ENCODE measurements at regions of chr15 and their contacts with region 1.

Region 1: DNA sequence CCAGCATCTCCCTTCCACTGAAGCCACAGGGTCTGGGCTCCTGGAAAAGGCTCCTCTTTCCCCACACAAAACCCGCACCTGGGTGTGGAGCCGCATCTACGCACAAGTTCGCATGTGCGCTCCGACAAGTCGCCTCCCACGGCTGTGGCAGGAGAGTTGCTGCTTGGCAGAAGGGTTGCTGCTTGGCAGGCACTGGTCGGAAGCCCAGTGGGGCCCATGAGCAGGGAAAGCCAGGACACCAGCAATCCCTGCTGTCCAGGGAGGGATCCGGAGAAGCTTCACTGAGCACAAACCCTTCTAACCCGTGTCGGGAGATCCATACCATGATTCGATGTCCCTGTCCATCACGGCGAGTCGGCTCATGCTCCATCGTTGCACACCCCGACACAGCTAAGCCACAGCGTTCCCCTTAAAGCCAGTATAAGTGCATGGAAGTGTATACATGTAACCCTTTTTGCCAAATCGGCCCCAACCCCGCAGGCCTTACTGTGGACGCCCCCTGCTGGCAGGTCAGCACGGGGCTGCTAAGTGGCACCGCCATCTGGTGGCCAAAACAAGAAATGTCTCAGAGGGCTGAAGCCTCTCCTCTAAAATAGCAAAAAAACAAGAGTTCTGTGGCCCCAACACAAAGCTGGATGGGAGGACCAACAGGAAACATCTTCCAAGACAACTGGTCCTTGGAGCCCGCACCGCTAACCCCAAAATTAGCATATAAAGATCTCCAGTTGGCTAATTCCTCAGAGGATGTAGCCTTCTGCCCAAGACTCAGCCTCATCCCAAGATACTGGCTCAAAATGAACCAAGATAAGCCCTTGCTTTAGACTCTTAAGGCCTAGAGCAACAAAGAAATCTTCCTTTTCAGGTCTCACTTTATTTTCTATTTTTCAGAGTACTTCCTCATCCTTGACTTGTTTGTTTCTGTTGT is 8.3 kb downstream of the ANKRD63 start:
- DNase-seq: peak; percentile 78 to 84 (median 81)
- H3K4me3 ChIP-seq: no peak overlapping the region
- H3K4me3 Mint-ChIP-seq: no peak overlapping the region
- H3K27ac ChIP-seq: no peak overlapping the region
- H3K27ac Mint-ChIP-seq: peak overlapping the region in 3 of 7 donors; percentile 19 to 41 (median 36)
- H3K4me1 ChIP-seq: peaks cover 48 to 50% of the 10 kb centered on the region in 2 donors
- H3K4me1 Mint-ChIP-seq: peaks cover 44% of the 10 kb centered on the region
- H3K27me3 ChIP-seq: no peaks in the 10 kb centered on the region
- H3K27me3 Mint-ChIP-seq: peaks cover 12 to 25% (median 15%) of the 10 kb centered on the region in 3 donors
- CTCF ChIP-seq: peak; percentile 100

Region 2: GRCh38 chr15:39896846-39897245 is 377.8 kb before region 1 on chr15:
- intact Hi-C with region 1: no loop called
- DNase-seq: no peak
- H3K4me3 ChIP-seq: no peak overlapping the region
- H3K4me3 Mint-ChIP-seq: no peak overlapping the region
- H3K27ac ChIP-seq: no peak overlapping the region
- H3K27ac Mint-ChIP-seq: no peak overlapping the region
- H3K4me1 ChIP-seq: no peaks in the 10 kb centered on the region
- H3K4me1 Mint-ChIP-seq: no peaks in the 10 kb centered on the region
- H3K27me3 ChIP-seq: peaks cover 0 to 2% of the 10 kb centered on the region in 2 donors
- H3K27me3 Mint-ChIP-seq: peaks cover 2 to 5% (median 5%) of the 10 kb centered on the region in 3 donors
- CTCF ChIP-seq: no peak

Region 3: DNA sequence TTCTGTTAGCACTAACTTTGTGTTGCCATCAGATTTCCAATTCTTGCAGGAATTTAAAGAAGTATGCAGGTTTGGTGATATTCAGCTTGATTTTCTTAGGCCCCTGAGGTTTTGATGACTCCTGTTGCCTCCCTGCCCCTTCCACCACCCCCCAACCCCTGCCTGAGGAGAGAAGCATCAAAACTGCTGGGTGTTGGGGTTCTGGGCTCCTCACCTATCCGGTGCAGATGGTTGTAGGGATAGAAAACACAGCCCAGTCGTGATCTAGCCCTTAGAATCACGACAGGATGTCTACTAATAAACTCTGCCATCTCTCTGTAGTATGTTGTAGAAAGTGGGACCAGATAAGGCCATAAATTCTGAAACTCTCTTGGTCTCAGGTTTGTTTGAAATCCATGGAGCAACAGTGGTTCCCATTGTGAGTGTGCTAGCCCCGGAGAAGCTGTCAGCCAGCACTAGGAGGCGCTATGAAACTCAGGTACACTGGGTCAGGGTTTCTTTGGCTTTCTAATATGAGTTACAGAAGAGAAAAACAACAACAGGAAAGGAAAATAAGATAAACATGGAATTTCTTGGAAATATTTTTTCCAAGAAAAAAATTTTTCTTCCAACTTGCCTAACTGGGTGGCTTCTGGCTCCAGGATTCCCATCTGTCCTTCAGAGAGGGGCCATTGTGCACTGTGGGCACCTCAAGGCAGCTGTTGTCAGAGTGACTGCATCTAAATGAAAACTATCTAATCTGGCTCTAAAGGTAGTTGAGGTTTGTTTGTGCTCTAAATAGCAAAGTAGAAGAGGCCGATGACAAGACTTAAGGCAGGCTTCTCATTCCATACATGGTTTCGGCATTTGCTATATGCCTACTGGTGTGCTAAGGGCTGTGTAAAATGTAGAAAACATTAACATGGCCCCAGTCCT is 244.4 kb before region 1 on chr15:
- intact Hi-C with region 1: loop called in 1 of 2 experiments (anchors 5 kb)
- DNase-seq: no peak
- H3K4me3 ChIP-seq: no peak overlapping the region
- H3K4me3 Mint-ChIP-seq: no peak overlapping the region
- H3K27ac ChIP-seq: no peak overlapping the region
- H3K27ac Mint-ChIP-seq: peak overlapping the region in 1 of 7 donors; percentile 50
- H3K4me1 ChIP-seq: no peaks in the 10 kb centered on the region
- H3K4me1 Mint-ChIP-seq: no peaks in the 10 kb centered on the region
- H3K27me3 ChIP-seq: no peaks in the 10 kb centered on the region
- H3K27me3 Mint-ChIP-seq: no peaks in the 10 kb centered on the region
- CTCF ChIP-seq: peak; percentile 32

Region 4: DNA sequence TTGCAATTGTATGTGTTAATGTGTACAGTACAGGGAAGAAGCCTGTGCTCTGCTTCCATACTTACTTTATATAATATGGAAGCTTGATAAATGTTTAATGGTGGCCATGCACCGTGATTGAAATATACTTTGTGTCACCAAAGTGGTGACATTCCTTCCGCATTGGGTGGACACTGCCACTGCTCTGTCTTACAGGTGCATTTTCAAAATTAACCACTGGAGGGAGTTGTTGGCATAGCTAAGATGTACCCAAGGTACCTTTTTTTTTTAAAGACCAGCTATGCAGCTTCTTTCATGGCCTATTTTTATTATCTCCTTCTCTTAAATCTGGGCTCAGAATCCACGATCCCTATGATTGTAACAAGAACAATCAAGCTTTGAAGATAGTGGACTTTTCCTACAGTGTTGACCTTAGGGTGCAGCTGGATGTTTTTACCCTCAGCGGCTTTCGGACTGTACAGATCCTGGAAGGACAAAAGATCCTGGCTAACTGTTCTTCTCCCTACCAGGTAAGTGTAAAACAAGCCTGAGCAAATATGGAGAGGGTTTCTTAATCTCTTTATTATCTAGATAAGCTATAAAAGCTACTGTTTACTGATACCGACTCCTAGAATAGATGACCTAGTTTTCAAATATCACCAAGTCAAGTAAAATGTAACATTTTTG is 57.3 kb before region 1 on chr15:
- intact Hi-C with region 1: loop called (anchors 1 to 2 kb)
- DNase-seq: peak; percentile 69 to 79 (median 75)
- H3K4me3 ChIP-seq: no peak overlapping the region
- H3K4me3 Mint-ChIP-seq: no peak overlapping the region
- H3K27ac ChIP-seq: no peak overlapping the region
- H3K27ac Mint-ChIP-seq: no peak overlapping the region
- H3K4me1 ChIP-seq: no peaks in the 10 kb centered on the region
- H3K4me1 Mint-ChIP-seq: no peaks in the 10 kb centered on the region
- H3K27me3 ChIP-seq: no peaks in the 10 kb centered on the region
- H3K27me3 Mint-ChIP-seq: no peaks in the 10 kb centered on the region
- CTCF ChIP-seq: peak; percentile 87

Region 5: GRCh38 chr15:40338041-40338657 is 63.5 kb after region 1 on chr15:
- intact Hi-C with region 1: loop called in 1 of 2 experiments (anchors 5 kb)
- DNase-seq: peak; percentile 78 to 81 (median 80)
- H3K4me3 ChIP-seq: peak overlapping the region in 1 of 3 experiments; percentile 32
- H3K4me3 Mint-ChIP-seq: peak overlapping the region in 1 of 2 donors; percentile 76
- H3K27ac ChIP-seq: no peak overlapping the region
- H3K27ac Mint-ChIP-seq: peak overlapping the region in 2 of 7 donors; percentile 25 to 71
- H3K4me1 ChIP-seq: peaks cover 81 to 89% of the 10 kb centered on the region in 2 donors
- H3K4me1 Mint-ChIP-seq: peaks cover 72% of the 10 kb centered on the region
- H3K27me3 ChIP-seq: no peaks in the 10 kb centered on the region
- H3K27me3 Mint-ChIP-seq: peaks cover 0 to 5% (median 2%) of the 10 kb centered on the region in 3 donors
- CTCF ChIP-seq: peak; percentile 95

Region 6: GRCh38 chr15:40694688-40695468 is 420.3 kb after region 1 on chr15 and contains the start of gene RAD51:
- intact Hi-C with region 1: no loop called
- DNase-seq: peak; percentile 95 to 96 (median 95)
- H3K4me3 ChIP-seq: peak within 1 kb of the TSS; percentile 58 to 100 (median 95)
- H3K4me3 Mint-ChIP-seq: peak within 1 kb of the TSS; percentile 99 to 100
- H3K27ac ChIP-seq: peak within 1 kb of the TSS; percentile 84 to 86
- H3K27ac Mint-ChIP-seq: peak within 1 kb of the TSS; percentile 88 to 97 (median 96)
- H3K4me1 ChIP-seq: peaks cover 16 to 21% of the 10 kb centered on the region in 2 donors
- H3K4me1 Mint-ChIP-seq: peaks cover 30% of the 10 kb centered on the region
- H3K27me3 ChIP-seq: no peaks in the 10 kb centered on the region
- H3K27me3 Mint-ChIP-seq: no peaks in the 10 kb centered on the region
- CTCF ChIP-seq: no peak
- polyA plus RNA-seq, gene RAD51: 0.28 to 0.61 TPM in 2 of 3 donors, not detected in the other